Activated naive CD4-positive, alpha-beta T cell treated with anti-CD3 and anti-CD28 coated beads for 36 hours (primary cell): ENCODE measurements at regions of chr20 and their contacts with region 1.

Region 1: GRCh38 chr20:57473246-57474048 is 51.5 kb downstream of the CTCFL start:
- DNase-seq: peak; percentile 74
- H3K4me3 Mint-ChIP-seq: no peak overlapping the region
- H3K27ac Mint-ChIP-seq: peak overlapping the region; percentile 58
- H3K4me1 Mint-ChIP-seq: peaks cover 23% of the 10 kb centered on the region
- H3K27me3 Mint-ChIP-seq: no peaks in the 10 kb centered on the region

Region 2: DNA sequence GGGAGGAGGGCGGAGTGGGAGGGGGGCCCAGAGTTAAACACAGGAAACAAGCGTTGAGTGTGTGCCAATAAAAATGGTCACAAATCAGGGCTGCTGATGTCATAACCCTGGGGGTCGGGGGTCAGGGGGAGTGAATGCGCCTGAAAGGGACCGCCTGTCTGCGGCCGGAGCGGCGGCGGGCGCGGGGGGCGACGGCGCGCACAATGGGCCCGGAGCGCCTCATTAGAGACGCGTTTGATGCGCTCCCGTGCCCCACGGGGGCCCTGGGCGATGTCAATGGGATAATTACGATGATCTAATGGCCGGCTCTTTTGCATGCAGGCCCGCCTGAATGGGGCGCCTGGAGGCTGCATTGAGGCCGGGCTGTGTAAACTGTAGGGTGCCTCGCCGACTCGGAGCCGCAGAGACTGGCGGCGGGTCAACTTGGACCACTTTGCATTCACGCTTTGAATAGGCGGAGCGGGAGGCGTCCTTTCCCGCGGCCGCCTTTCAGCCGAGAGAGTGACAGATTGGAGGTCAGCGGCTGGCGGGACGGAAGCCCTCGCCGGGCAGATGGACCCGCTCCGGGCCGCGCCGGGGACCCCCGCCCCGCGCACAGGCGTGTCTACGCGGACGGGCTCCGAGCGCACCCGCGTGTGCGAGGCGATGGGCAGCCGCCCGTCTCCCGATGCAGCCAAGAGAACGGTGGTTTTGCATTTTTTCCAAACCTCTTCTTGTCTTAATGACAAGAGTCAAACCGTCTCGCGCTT is 548.2 kb before region 1 on chr20:
- CTCF ChIA-PET with region 1: no interaction called
- intact Hi-C with region 1: no loop called
- DNase-seq: no peak
- H3K4me3 Mint-ChIP-seq: no peak overlapping the region
- H3K27ac Mint-ChIP-seq: no peak overlapping the region
- H3K4me1 Mint-ChIP-seq: peaks cover 6% of the 10 kb centered on the region
- H3K27me3 Mint-ChIP-seq: peaks cover 65% of the 10 kb centered on the region

Region 3: GRCh38 chr20:57450419-57450818 is 23.0 kb before region 1 on chr20:
- CTCF ChIA-PET with region 1: no interaction called
- intact Hi-C with region 1: loop called (anchors 2 kb)
- DNase-seq: peak; percentile 31
- H3K4me3 Mint-ChIP-seq: no peak overlapping the region
- H3K27ac Mint-ChIP-seq: no peak overlapping the region
- H3K4me1 Mint-ChIP-seq: peaks cover 29% of the 10 kb centered on the region
- H3K27me3 Mint-ChIP-seq: no peaks in the 10 kb centered on the region